Activated B cell treated with CpG ODN at 0.5 μM for 24 hours (primary cell): ENCODE measurements at regions of chr3 and their contacts with region 1.

Region 1: GRCh38 chr3:31531992-31532586 is 636 bp upstream of the STT3B start:
- DNase-seq: peak; percentile 97
- ATAC-seq: peak; percentile 84
- H3K4me3 Mint-ChIP-seq: peak overlapping the region; percentile 96
- H3K27ac Mint-ChIP-seq: peak overlapping the region; percentile 99
- H3K4me1 Mint-ChIP-seq: peaks cover 31% of the 10 kb centered on the region
- H3K27me3 Mint-ChIP-seq: no peaks in the 10 kb centered on the region
- CTCF ChIP-seq: no peak

Region 2: GRCh38 chr3:30606301-30607031 is 925.6 kb before region 1 on chr3 and contains the start of gene TGFBR2:
- CTCF ChIA-PET with region 1: no interaction called
- POLR2A ChIA-PET with region 1: interaction called, 5 read pairs
- intact Hi-C with region 1: loop called (anchors 1 kb)
- DNase-seq: peak; percentile 84
- ATAC-seq: peak; percentile 81
- H3K4me3 Mint-ChIP-seq: peak within 1 kb of the TSS; percentile 97
- H3K27ac Mint-ChIP-seq: peak within 1 kb of the TSS; percentile 99
- H3K4me1 Mint-ChIP-seq: peaks cover 85% of the 10 kb centered on the region
- H3K27me3 Mint-ChIP-seq: no peaks in the 10 kb centered on the region
- CTCF ChIP-seq: no peak
- total RNA-seq, gene TGFBR2: 99.1 and 104 TPM in 2 replicates

Region 3: DNA sequence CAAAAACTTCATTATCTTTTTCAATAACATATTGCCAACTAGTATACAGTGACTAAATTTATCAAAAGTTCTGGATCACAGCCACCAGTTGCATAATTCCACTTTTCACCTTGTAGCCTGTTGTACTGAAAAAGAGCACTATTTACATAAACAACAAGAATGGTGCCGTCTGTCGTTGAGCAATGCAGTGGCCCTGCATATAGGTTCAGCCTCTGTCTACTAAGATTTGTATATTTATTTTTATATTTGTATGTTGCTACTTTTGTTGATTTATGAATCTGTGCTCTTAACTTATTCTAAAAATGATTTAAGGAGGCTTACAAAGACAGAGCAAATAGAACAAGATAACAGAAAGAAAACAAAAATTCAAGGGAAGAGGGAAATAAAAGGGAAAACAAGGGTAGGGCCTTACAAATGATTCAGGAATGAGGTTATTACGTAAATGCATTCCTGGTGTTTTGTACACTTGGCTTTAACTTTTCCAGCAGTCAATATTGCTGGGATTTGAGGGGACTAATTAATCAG is 257.0 kb before region 1 on chr3:
- CTCF ChIA-PET with region 1: no interaction called
- POLR2A ChIA-PET with region 1: no interaction called
- intact Hi-C with region 1: no loop called
- DNase-seq: no peak
- ATAC-seq: no peak
- H3K4me3 Mint-ChIP-seq: no peak overlapping the region
- H3K27ac Mint-ChIP-seq: no peak overlapping the region
- H3K4me1 Mint-ChIP-seq: no peaks in the 10 kb centered on the region
- H3K27me3 Mint-ChIP-seq: peaks cover 10% of the 10 kb centered on the region
- CTCF ChIP-seq: no peak

Region 4: DNA sequence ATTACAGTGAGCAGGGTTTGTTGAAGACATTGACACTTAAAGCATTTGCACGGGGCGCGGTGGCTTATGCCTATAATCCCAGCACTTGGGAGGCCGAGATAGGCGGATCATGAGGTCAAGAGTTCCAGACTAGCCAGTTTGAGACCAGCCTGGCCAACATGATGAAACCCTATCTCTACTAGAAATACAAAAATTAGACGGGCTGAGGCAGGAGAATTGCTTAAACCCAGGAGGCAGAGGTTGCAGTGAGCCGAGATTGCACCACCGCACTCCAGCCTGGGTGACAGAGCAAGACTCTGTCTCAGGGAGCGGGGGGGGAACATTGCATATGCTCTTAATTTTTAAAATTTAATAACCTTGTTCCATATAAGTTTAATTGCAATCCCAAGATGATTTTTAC is 12.5 kb after region 1 on chr3:
- CTCF ChIA-PET with region 1: no interaction called
- POLR2A ChIA-PET with region 1: interaction called, 14 read pairs
- intact Hi-C with region 1: loop called (anchors 1 kb)
- DNase-seq: no peak
- ATAC-seq: no peak
- H3K4me3 Mint-ChIP-seq: no peak overlapping the region
- H3K27ac Mint-ChIP-seq: no peak overlapping the region
- H3K4me1 Mint-ChIP-seq: peaks cover 70% of the 10 kb centered on the region
- H3K27me3 Mint-ChIP-seq: no peaks in the 10 kb centered on the region
- CTCF ChIP-seq: no peak

Region 5: GRCh38 chr3:31596176-31596575 is 64.1 kb after region 1 on chr3:
- CTCF ChIA-PET with region 1: no interaction called
- POLR2A ChIA-PET with region 1: no interaction called
- intact Hi-C with region 1: no loop called
- DNase-seq: no peak
- ATAC-seq: no peak
- H3K4me3 Mint-ChIP-seq: no peak overlapping the region
- H3K27ac Mint-ChIP-seq: no peak overlapping the region
- H3K4me1 Mint-ChIP-seq: peaks cover 10% of the 10 kb centered on the region
- H3K27me3 Mint-ChIP-seq: no peaks in the 10 kb centered on the region
- CTCF ChIP-seq: no peak

Region 6: DNA sequence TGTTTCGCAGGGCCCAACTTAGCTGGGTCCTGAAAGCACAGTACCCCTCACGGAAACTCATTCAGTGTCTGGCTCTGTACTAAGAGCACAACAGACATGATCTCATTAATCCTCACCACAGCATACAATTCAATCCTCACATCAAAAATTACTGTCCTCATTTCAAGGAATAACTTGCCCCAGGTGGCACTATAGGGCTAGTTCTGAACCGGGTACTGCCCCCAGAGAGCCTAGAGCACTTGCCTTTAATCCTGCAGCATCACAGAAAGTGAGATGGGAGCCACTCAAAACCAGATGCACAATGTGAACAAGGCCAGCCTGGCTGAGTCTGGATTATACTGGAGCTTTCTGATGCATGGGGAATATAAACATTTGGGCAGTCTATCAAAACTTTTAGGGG is 326.4 kb after region 1 on chr3:
- CTCF ChIA-PET with region 1: no interaction called
- POLR2A ChIA-PET with region 1: no interaction called
- intact Hi-C with region 1: no loop called
- DNase-seq: no peak
- ATAC-seq: peak; percentile 69
- H3K4me3 Mint-ChIP-seq: no peak overlapping the region
- H3K27ac Mint-ChIP-seq: peak overlapping the region; percentile 71
- H3K4me1 Mint-ChIP-seq: peaks cover 74% of the 10 kb centered on the region
- H3K27me3 Mint-ChIP-seq: no peaks in the 10 kb centered on the region
- CTCF ChIP-seq: no peak

Region 7: GRCh38 chr3:31952205-31952604 is 420.1 kb after region 1 on chr3:
- CTCF ChIA-PET with region 1: no interaction called
- POLR2A ChIA-PET with region 1: interaction called, 10 read pairs
- intact Hi-C with region 1: no loop called
- DNase-seq: peak; percentile 61
- ATAC-seq: peak; percentile 82
- H3K4me3 Mint-ChIP-seq: peak overlapping the region; percentile 75
- H3K27ac Mint-ChIP-seq: peak overlapping the region; percentile 96
- H3K4me1 Mint-ChIP-seq: peaks cover 91% of the 10 kb centered on the region
- H3K27me3 Mint-ChIP-seq: no peaks in the 10 kb centered on the region
- CTCF ChIP-seq: no peak

Region 8: DNA sequence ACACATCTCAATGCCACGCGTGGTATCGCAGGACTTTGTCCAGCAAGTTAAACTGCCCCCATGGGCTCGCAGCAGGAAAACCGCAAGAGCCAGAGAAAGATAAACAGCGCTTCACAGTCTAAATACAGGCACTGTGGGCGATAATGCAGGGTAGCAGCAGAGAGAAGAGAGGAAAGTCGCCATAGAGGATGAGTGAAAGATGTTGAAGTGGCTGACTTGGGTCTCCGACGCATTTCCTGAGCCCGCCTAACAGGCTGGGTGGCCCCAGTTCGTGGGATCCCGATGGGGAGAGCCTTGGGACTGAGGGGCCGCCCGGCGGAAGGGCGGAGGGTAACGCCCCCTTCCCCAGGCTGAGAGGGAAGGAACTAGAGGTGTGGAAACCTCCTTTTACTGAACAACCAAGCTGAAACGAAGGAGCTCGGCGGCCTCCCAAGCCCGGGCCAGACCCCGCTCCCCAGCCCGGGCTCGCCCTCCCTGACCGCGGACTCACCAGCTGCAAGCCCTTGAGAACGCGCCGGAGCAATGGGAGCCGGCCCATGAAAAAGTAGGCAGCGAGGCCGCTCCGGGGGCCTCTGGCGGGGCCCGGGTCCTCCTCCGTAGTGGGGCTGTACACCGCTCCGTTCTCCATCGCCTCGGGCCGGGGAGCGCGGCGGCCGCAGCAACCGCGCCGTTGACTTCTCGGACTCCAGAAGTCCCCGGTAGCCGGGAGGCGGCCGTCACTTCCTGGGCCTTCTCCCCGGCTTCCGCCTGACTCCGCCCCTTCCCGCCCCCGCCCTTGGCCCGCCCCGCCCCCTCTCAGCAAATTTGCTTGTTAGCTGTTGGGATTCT is 970.2 kb after region 1 on chr3 and contains the start of gene CMTM6:
- CTCF ChIA-PET with region 1: no interaction called
- POLR2A ChIA-PET with region 1: interaction called, 3 read pairs
- intact Hi-C with region 1: loop called (anchors 5 kb)
- DNase-seq: peak; percentile 67
- ATAC-seq: peak; percentile 80
- H3K4me3 Mint-ChIP-seq: peak within 1 kb of the TSS; percentile 98
- H3K27ac Mint-ChIP-seq: peak within 1 kb of the TSS; percentile 90
- H3K4me1 Mint-ChIP-seq: peaks cover 41% of the 10 kb centered on the region
- H3K27me3 Mint-ChIP-seq: no peaks in the 10 kb centered on the region
- CTCF ChIP-seq: no peak
- total RNA-seq, gene CMTM6: 84.6 and 90.1 TPM in 2 replicates

Region 9: GRCh38 chr3:33113772-33114621 is 1581.9 kb after region 1 on chr3 and contains the start of gene CRTAP:
- CTCF ChIA-PET with region 1: no interaction called
- POLR2A ChIA-PET with region 1: interaction called, 3 read pairs
- intact Hi-C with region 1: loop called (anchors 2 kb)
- DNase-seq: peak; percentile 91
- ATAC-seq: peak; percentile 83
- H3K4me3 Mint-ChIP-seq: peak within 1 kb of the TSS; percentile 87
- H3K27ac Mint-ChIP-seq: peak within 1 kb of the TSS; percentile 85
- H3K4me1 Mint-ChIP-seq: peaks cover 50% of the 10 kb centered on the region
- H3K27me3 Mint-ChIP-seq: no peaks in the 10 kb centered on the region
- CTCF ChIP-seq: no peak
- total RNA-seq, gene CRTAP: 36.5 and 36.6 TPM in 2 replicates